ENCODE measurements at regions of chr13 and their contacts with region 1.

Region 1: GRCh38 chr13:40777166-40777808 is 6.3 kb upstream of the MRPS31 start:
- DNase-seq: peak in 8 of 9 experiments; percentile 18 to 77 (median 36)
- ATAC-seq: no peak
- H3K4me3 ChIP-seq: peak overlapping the region in 1 of 2 experiments; percentile 17
- H3K4me3 Mint-ChIP-seq: peak overlapping the region; percentile 76
- H3K27ac ChIP-seq: peak overlapping the region; percentile 25 to 84
- H3K27ac Mint-ChIP-seq: peak overlapping the region; percentile 97
- H3K4me1 ChIP-seq: peaks cover 24% of the 10 kb centered on the region
- H3K4me1 Mint-ChIP-seq: peaks cover 30% of the 10 kb centered on the region
- H3K27me3 ChIP-seq: no peaks in the 10 kb centered on the region
- H3K27me3 Mint-ChIP-seq: no peaks in the 10 kb centered on the region
- CTCF ChIP-seq: peak; percentile 59

Region 2: GRCh38 chr13:39876258-39876657 is 901.0 kb before region 1 on chr13:
- CTCF ChIA-PET with region 1: no interaction called
- POLR2A ChIA-PET with region 1: no interaction called
- intact Hi-C with region 1: no loop called
- DNase-seq: no peak
- ATAC-seq: no peak
- H3K4me3 ChIP-seq: no peak overlapping the region
- H3K4me3 Mint-ChIP-seq: no peak overlapping the region
- H3K27ac ChIP-seq: no peak overlapping the region
- H3K27ac Mint-ChIP-seq: no peak overlapping the region
- H3K4me1 ChIP-seq: no peaks in the 10 kb centered on the region
- H3K4me1 Mint-ChIP-seq: no peaks in the 10 kb centered on the region
- H3K27me3 ChIP-seq: no peaks in the 10 kb centered on the region
- H3K27me3 Mint-ChIP-seq: peaks cover 6% of the 10 kb centered on the region
- CTCF ChIP-seq: no peak

Region 3: GRCh38 chr13:40652588-40652940 is 124.7 kb before region 1 on chr13:
- CTCF ChIA-PET with region 1: no interaction called
- POLR2A ChIA-PET with region 1: no interaction called
- intact Hi-C with region 1: no loop called
- DNase-seq: no peak
- ATAC-seq: no peak
- H3K4me3 ChIP-seq: no peak overlapping the region
- H3K4me3 Mint-ChIP-seq: peak overlapping the region; percentile 63
- H3K27ac ChIP-seq: no peak overlapping the region
- H3K27ac Mint-ChIP-seq: peak overlapping the region; percentile 58
- H3K4me1 ChIP-seq: peaks cover 88% of the 10 kb centered on the region
- H3K4me1 Mint-ChIP-seq: peaks cover 91% of the 10 kb centered on the region
- H3K27me3 ChIP-seq: no peaks in the 10 kb centered on the region
- H3K27me3 Mint-ChIP-seq: no peaks in the 10 kb centered on the region
- CTCF ChIP-seq: no peak

Region 4: GRCh38 chr13:40789275-40790133 is 12.2 kb after region 1 on chr13 and contains the start of gene SLC25A15:
- CTCF ChIA-PET with region 1: interaction called, 7 read pairs
- POLR2A ChIA-PET with region 1: interaction called, 5 read pairs
- intact Hi-C with region 1: loop called in 1 of 2 experiments (anchors 1 kb)
- DNase-seq: peak; percentile 37 to 87 (median 71)
- ATAC-seq: peak; percentile 86
- H3K4me3 ChIP-seq: peak within 1 kb of the TSS; percentile 63 to 74
- H3K4me3 Mint-ChIP-seq: peak within 1 kb of the TSS; percentile 84
- H3K27ac ChIP-seq: peak within 1 kb of the TSS; percentile 70 to 74
- H3K27ac Mint-ChIP-seq: peak within 1 kb of the TSS; percentile 82
- H3K4me1 ChIP-seq: peaks cover 15% of the 10 kb centered on the region
- H3K4me1 Mint-ChIP-seq: peaks cover 37% of the 10 kb centered on the region
- H3K27me3 ChIP-seq: no peaks in the 10 kb centered on the region
- H3K27me3 Mint-ChIP-seq: no peaks in the 10 kb centered on the region
- CTCF ChIP-seq: no peak
- total RNA-seq, gene SLC25A15: 5.0 to 7.5 TPM

Region 5: GRCh38 chr13:40813661-40814454 is 36.6 kb after region 1 on chr13:
- CTCF ChIA-PET with region 1: no interaction called
- POLR2A ChIA-PET with region 1: no interaction called
- intact Hi-C with region 1: loop called in 1 of 2 experiments (anchors 1 kb)
- DNase-seq: peak in 2 of 9 experiments; percentile 24 to 43
- ATAC-seq: no peak
- H3K4me3 ChIP-seq: no peak overlapping the region
- H3K4me3 Mint-ChIP-seq: no peak overlapping the region
- H3K27ac ChIP-seq: no peak overlapping the region
- H3K27ac Mint-ChIP-seq: no peak overlapping the region
- H3K4me1 ChIP-seq: no peaks in the 10 kb centered on the region
- H3K4me1 Mint-ChIP-seq: no peaks in the 10 kb centered on the region
- H3K27me3 ChIP-seq: no peaks in the 10 kb centered on the region
- H3K27me3 Mint-ChIP-seq: no peaks in the 10 kb centered on the region
- CTCF ChIP-seq: no peak

Region 6: GRCh38 chr13:41013835-41014234 is 236.5 kb after region 1 on chr13:
- CTCF ChIA-PET with region 1: no interaction called
- POLR2A ChIA-PET with region 1: no interaction called
- intact Hi-C with region 1: no loop called
- DNase-seq: no peak
- ATAC-seq: no peak
- H3K4me3 ChIP-seq: peak overlapping the region in 1 of 2 experiments; percentile 24
- H3K4me3 Mint-ChIP-seq: peak overlapping the region; percentile 88
- H3K27ac ChIP-seq: peak overlapping the region in 1 of 2 experiments; percentile 58
- H3K27ac Mint-ChIP-seq: peak overlapping the region; percentile 94
- H3K4me1 ChIP-seq: peaks cover 51% of the 10 kb centered on the region
- H3K4me1 Mint-ChIP-seq: peaks cover 64% of the 10 kb centered on the region
- H3K27me3 ChIP-seq: no peaks in the 10 kb centered on the region
- H3K27me3 Mint-ChIP-seq: no peaks in the 10 kb centered on the region
- CTCF ChIP-seq: no peak

Measured in CD8-positive, alpha-beta T cell (primary cell).